ENCODE measurements at regions of chr6 and their contacts with region 1.

Region 1: GRCh38 chr6:83685481-83685880 is 23.4 kb downstream of the SNAP91 start:
- DNase-seq: no peak
- H3K4me3 ChIP-seq: no peak overlapping the region
- H3K27ac ChIP-seq: no peak overlapping the region
- H3K4me1 ChIP-seq: no peaks in the 10 kb centered on the region
- H3K27me3 ChIP-seq: no peaks in the 10 kb centered on the region
- CTCF ChIP-seq: no peak
- POLR2A ChIP-seq: no peak

Region 2: DNA sequence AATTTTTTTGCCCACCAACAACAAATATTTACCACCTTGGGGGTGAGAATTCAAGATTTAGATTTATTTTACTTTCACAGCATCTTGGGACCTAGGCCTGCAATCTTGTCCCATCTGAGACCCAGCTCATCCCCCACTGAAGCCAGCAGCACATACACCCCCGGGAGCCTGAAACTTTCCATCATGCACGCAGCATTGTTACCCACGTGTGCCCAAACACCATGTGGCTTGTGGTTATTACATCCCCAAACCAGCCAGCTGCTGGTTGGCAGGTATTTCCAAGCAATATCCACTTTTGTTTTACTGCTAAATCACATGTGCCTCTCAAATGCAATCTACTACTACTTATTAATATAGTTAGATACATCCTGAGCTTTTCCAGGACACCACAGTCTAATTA is 1615.1 kb after region 1 on chr6:
- intact Hi-C with region 1: loop called (anchors 5 kb)
- DNase-seq: no peak
- H3K4me3 ChIP-seq: no peak overlapping the region
- H3K27ac ChIP-seq: no peak overlapping the region
- H3K4me1 ChIP-seq: no peaks in the 10 kb centered on the region
- H3K27me3 ChIP-seq: no peaks in the 10 kb centered on the region
- CTCF ChIP-seq: no peak
- POLR2A ChIP-seq: no peak